CD4-positive, alpha-beta memory T cell (primary cell): ENCODE measurements at regions of chrX and their contacts with region 1.

Region 1: GRCh38 chrX:123859846-123860838 is at the start of gene XIAP:
- DNase-seq: peak; percentile 63 to 76 (median 68)
- H3K4me3 ChIP-seq: peak within 1 kb of the TSS; percentile 29 to 69
- H3K4me3 Mint-ChIP-seq: peak within 1 kb of the TSS; percentile 86 to 96 (median 94)
- H3K27ac ChIP-seq: peak within 1 kb of the TSS; percentile 81
- H3K27ac Mint-ChIP-seq: peak within 1 kb of the TSS; percentile 96 to 97 (median 97)
- H3K4me1 ChIP-seq: peaks cover 16% of the 10 kb centered on the region
- H3K4me1 Mint-ChIP-seq: peaks cover 7 to 31% (median 18%) of the 10 kb centered on the region in 4 donors
- H3K27me3 ChIP-seq: no peaks in the 10 kb centered on the region
- H3K27me3 Mint-ChIP-seq: no peaks in the 10 kb centered on the region
- total RNA-seq, gene XIAP: 59.9 to 64.6 TPM

Region 2: DNA sequence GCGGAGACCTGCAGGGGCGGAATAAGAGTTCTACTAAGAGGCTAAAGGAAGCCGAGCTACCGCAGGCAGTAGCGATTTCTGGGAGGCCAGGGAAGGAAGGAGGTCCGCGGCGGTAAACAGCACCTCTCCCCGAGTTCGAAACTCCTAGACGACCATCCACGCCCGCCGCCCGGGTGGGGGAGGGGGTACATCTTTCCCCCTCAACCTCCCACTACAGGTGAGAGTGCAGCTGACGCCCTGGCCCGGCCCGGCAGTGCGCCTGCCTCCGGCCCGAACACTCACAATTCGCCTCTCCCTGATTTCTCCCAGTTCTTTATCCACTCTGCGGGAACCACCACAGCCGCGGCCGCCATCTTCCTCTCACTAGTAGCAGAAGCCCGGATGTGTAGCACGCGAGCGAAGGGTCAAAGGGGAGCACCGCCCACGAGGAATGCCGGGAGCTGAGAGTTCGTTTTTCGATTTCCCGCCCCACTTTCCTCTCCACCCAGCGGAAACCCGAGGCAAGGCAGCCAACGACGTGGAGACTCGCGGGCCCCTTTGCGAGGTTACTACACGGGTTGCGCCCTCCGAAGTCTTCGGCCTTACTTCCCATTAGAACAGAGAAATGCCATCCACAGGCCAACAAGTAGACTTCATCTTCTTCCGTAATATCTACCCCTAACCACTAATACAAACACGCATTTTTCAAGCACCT is 127.3 kb before region 1 on chrX and contains the start of gene THOC2:
- CTCF ChIA-PET with region 1: no interaction called
- POLR2A ChIA-PET with region 1: no interaction called
- intact Hi-C with region 1: loop called (anchors 2 kb)
- DNase-seq: peak; percentile 70 to 84 (median 74)
- H3K4me3 ChIP-seq: peak within 1 kb of the TSS; percentile 47 to 66
- H3K4me3 Mint-ChIP-seq: peak within 1 kb of the TSS; percentile 86 to 97 (median 96)
- H3K27ac ChIP-seq: peak within 1 kb of the TSS; percentile 66
- H3K27ac Mint-ChIP-seq: peak within 1 kb of the TSS; percentile 77 to 96 (median 94)
- H3K4me1 ChIP-seq: peaks cover 39% of the 10 kb centered on the region
- H3K4me1 Mint-ChIP-seq: peaks cover 16 to 52% (median 31%) of the 10 kb centered on the region in 4 donors
- H3K27me3 ChIP-seq: no peaks in the 10 kb centered on the region
- H3K27me3 Mint-ChIP-seq: no peaks in the 10 kb centered on the region
- total RNA-seq, gene THOC2: 100 to 104 TPM

Region 3: GRCh38 chrX:123818243-123818642 is 41.9 kb before region 1 on chrX:
- CTCF ChIA-PET with region 1: no interaction called
- POLR2A ChIA-PET with region 1: no interaction called
- intact Hi-C with region 1: no loop called
- DNase-seq: no peak
- H3K4me3 ChIP-seq: no peak overlapping the region
- H3K4me3 Mint-ChIP-seq: no peak overlapping the region
- H3K27ac ChIP-seq: no peak overlapping the region
- H3K27ac Mint-ChIP-seq: no peak overlapping the region
- H3K4me1 ChIP-seq: no peaks in the 10 kb centered on the region
- H3K4me1 Mint-ChIP-seq: no peaks in the 10 kb centered on the region
- H3K27me3 ChIP-seq: no peaks in the 10 kb centered on the region
- H3K27me3 Mint-ChIP-seq: no peaks in the 10 kb centered on the region

Region 4: GRCh38 chrX:123878252-123878721 is 18.1 kb after region 1 on chrX:
- CTCF ChIA-PET with region 1: no interaction called
- POLR2A ChIA-PET with region 1: interaction called, 4 read pairs
- intact Hi-C with region 1: loop called (anchors 2 kb)
- DNase-seq: peak; percentile 28 to 38 (median 31)
- H3K4me3 ChIP-seq: no peak overlapping the region
- H3K4me3 Mint-ChIP-seq: peak overlapping the region; percentile 45 to 76 (median 66)
- H3K27ac ChIP-seq: peak overlapping the region; percentile 9
- H3K27ac Mint-ChIP-seq: peak overlapping the region; percentile 52 to 87 (median 75)
- H3K4me1 ChIP-seq: peaks cover 17% of the 10 kb centered on the region
- H3K4me1 Mint-ChIP-seq: peaks cover 17 to 32% (median 23%) of the 10 kb centered on the region in 4 donors
- H3K27me3 ChIP-seq: no peaks in the 10 kb centered on the region
- H3K27me3 Mint-ChIP-seq: no peaks in the 10 kb centered on the region